ENCODE measurements at regions of chr22 and their contacts with region 1.

Region 1: DNA sequence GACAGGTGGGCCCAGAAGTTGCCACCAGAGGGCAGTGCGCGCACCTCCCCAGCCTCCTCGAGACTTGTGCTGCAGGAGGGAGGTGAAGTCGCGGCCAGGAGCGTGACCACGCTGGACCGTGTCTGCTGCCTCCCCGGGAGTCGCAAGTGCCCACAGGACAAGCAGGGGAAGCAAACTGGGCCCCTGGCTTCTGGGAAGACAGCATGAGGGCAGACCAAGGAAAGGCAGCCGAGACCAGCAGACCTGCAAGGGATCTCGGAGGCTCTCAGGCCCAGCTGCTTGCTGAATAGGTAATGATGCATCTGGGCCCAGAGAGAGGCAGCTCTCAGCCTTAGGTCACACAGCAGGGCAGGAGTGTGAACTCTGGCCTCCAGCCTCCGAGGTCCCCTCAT is 17.0 kb upstream of the IL2RB start:
- DNase-seq: peak; percentile 75
- H3K4me3 Mint-ChIP-seq: no peak overlapping the region
- H3K27ac Mint-ChIP-seq: no peak overlapping the region
- H3K4me1 Mint-ChIP-seq: peaks cover 6% of the 10 kb centered on the region
- H3K27me3 Mint-ChIP-seq: peaks cover 22% of the 10 kb centered on the region
- CTCF ChIP-seq: peak; percentile 75

Region 2: DNA sequence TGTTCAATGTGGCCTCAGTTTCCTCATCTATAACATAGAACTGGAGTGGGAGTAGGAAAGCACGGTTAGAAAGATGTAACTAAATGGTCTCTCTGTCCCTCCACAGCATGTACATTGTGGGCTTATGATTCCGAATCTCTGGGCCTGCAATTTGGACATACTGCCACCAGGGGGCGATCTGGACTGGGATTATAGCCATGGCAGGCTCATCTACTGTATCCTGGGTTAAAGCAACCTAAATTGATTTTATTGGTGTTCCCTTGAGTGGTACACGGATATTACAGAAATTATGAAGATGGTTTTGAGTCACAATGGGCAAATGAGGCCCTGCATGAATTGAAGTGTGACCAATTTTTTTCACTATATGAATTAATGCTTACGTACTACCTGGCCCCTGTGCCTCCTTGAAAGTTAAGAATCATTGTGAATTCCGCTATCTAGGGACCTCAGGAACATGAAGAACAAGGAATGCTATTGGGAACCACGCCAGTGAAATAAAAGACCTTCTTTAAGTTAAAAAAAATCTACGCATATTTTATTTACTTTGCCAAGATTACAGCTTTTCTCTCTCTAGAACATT is 180.3 kb before region 1 on chr22:
- CTCF ChIA-PET with region 1: interaction called, 3 read pairs
- POLR2A ChIA-PET with region 1: no interaction called
- intact Hi-C with region 1: loop called (anchors 5 kb)
- DNase-seq: peak; percentile 57
- H3K4me3 Mint-ChIP-seq: no peak overlapping the region
- H3K27ac Mint-ChIP-seq: no peak overlapping the region
- H3K4me1 Mint-ChIP-seq: no peaks in the 10 kb centered on the region
- H3K27me3 Mint-ChIP-seq: peaks cover 16% of the 10 kb centered on the region
- CTCF ChIP-seq: peak; percentile 88

Region 3: GRCh38 chr22:37051391-37052385 is 115.0 kb before region 1 on chr22 and contains the start of gene KCTD17:
- CTCF ChIA-PET with region 1: no interaction called
- POLR2A ChIA-PET with region 1: no interaction called
- intact Hi-C with region 1: no loop called
- DNase-seq: peak; percentile 51
- H3K4me3 Mint-ChIP-seq: peak within 1 kb of the TSS; percentile 66
- H3K27ac Mint-ChIP-seq: no peak within 1 kb of the TSS
- H3K4me1 Mint-ChIP-seq: peaks cover 6% of the 10 kb centered on the region
- H3K27me3 Mint-ChIP-seq: no peaks in the 10 kb centered on the region
- CTCF ChIP-seq: no peak
- total RNA-seq, gene KCTD17: 11.7 and 12.8 TPM in 2 replicates

Region 4: DNA sequence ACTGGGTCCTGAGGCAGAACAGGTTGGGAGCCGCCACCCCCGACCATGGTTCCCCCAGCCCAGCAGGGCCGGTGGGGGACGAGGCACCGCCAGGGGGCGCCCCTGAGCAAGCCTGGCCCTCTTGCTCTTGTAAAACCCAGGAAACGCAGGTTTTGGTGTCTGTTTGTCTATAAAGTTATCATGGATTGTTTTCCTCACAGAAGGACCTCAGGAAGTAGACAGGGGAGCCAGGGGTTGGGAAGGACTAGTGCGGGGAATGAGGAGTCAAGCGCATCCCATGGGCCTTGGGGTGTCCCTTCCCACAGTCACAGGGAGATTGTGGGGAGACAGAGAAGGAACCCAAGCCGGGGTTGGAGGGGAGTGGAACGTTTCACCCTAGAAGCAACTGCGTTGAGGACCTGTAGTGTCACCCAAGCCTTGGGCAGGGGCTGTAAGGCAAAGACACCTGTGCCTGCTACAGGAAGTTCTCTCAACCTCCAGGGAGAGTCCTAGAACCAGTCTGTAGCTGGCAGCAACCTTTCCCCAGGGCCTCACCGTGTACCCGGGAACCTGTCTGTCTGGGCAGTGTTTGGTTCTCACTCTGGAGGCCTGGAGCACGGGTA is 88.7 kb before region 1 on chr22:
- CTCF ChIA-PET with region 1: no interaction called
- POLR2A ChIA-PET with region 1: no interaction called
- intact Hi-C with region 1: loop called (anchors 5 kb)
- DNase-seq: peak; percentile 55
- H3K4me3 Mint-ChIP-seq: no peak overlapping the region
- H3K27ac Mint-ChIP-seq: no peak overlapping the region
- H3K4me1 Mint-ChIP-seq: no peaks in the 10 kb centered on the region
- H3K27me3 Mint-ChIP-seq: peaks cover 41% of the 10 kb centered on the region
- CTCF ChIP-seq: peak; percentile 98

Region 5: DNA sequence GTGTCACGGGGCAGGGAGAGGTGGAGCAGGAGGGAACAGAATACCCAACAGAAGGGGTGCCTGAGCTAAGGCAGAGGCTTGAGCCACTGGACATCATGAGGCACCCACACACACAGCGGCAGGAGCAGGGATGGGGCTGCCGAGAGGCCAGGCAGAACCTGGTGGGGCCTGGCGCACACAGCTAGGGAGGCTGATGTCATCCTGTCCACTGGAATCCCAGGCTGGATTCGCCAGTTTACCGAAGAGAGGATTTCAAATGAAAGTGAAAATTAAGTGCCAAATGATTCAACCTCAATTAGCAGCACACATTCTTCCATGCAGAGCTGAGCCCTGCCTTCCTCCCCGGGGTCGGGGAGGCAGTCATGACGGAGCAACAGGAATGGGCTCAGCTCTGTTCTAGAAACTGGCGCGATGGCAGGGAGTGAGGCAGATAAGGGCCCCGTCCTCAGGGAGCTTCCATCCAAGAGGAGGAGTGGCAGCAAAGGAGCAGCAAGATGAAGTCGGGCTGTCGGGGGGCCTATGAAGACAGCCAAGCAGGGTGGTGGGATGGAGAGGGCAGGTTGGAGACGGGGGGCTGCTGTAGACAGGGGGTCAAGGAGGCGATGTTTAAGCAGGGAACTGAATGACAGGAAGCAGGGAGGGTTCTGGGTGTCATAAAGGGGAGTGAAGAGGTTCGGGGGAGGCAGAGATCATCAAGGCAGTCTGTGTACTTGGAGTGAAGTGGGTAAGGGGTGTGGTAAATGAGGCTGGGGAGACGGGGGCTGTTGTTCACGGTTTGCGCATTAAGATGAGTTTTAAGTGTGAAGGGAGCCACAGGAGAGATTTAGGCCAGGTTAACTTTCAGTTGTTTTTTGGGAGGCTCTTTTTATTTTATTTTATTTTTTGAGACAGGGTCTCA is 70.9 kb after region 1 on chr22:
- CTCF ChIA-PET with region 1: no interaction called
- POLR2A ChIA-PET with region 1: no interaction called
- intact Hi-C with region 1: no loop called
- DNase-seq: no peak
- H3K4me3 Mint-ChIP-seq: no peak overlapping the region
- H3K27ac Mint-ChIP-seq: no peak overlapping the region
- H3K4me1 Mint-ChIP-seq: no peaks in the 10 kb centered on the region
- H3K27me3 Mint-ChIP-seq: no peaks in the 10 kb centered on the region
- CTCF ChIP-seq: no peak

Measured in MCF 10A (cell line).